ENCODE measurements at regions of chr12 and their contacts with region 1.

Region 1: DNA sequence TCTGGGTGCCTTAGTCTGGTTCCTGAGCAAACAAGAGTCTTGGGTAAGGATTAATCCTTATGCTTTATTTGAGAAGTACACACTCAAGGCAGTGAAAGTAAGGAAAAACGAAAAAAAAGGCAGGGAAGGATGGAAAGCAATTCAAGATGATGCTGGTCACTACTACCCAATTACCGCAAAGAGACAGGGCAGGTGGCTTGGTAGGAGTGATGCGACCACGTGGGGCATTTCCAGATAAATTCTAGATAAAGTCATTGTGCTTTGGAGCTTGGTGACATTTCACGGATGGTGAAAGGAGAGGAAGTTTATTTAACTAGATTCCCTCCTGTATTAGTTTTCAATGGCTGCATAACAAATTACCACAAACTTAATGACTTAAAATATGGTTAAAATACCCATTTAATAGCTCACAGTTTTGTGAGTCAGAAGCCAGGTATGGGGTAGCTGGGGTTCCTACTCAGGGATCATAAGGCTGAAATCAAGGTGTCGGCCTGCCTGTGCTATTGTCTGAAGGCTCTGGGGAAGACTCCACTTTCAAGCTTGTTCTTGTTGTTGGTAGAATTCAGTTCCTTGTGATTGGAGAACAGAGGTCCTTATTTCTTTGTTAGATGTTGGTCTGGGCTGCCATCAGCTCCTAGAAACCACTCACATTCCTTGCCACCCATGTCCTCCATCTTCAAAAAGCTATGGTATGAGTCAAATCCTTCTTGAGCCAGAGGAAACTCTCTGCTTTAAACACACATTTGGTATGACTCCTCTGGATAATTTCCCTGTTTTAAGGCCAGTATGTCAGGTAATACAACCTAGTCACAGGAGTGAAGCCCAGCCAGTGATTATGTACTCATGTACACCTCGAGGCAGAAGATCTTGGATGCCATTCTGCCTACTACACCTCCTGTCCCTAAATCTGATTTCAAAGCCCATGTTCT is 5.6 kb upstream of the HMGA2 start:
- DNase-seq: no peak
- H3K4me3 ChIP-seq: no peak overlapping the region
- H3K27me3 ChIP-seq: no peaks in the 10 kb centered on the region
- CTCF ChIP-seq: no peak

Region 2: GRCh38 chr12:65857840-65858239 is 39.1 kb after region 1 on chr12:
- CTCF ChIA-PET with region 1: no interaction called
- POLR2A ChIA-PET with region 1: interaction called, 11 read pairs
- DNase-seq: no peak
- H3K4me3 ChIP-seq: no peak overlapping the region
- H3K27me3 ChIP-seq: no peaks in the 10 kb centered on the region
- CTCF ChIP-seq: no peak

Region 3: DNA sequence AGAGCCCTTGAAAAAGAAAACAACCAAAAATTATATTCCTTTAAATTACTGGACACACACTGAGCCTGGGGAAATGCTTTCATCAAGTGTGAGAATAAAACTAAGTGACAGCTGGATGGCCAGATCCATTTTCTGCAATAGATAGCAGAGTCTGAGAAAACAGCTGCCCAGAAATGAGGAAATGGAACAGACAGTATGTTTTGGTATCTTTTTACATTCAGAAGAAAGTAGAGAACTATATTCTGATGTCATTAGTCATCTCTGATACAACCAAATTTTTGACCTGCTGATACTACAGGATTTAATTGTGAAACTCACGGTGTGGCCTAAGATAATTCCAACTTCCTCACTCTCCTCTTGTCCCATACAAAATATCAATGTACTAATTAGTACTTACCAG is 83.8 kb after region 1 on chr12:
- CTCF ChIA-PET with region 1: no interaction called
- POLR2A ChIA-PET with region 1: interaction called, 11 read pairs
- DNase-seq: no peak
- H3K4me3 ChIP-seq: no peak overlapping the region
- H3K27me3 ChIP-seq: no peaks in the 10 kb centered on the region
- CTCF ChIP-seq: no peak

Measured in BJ (cell line).